ENCODE measurements at regions of chr14 and their contacts with region 1.

Region 1: DNA sequence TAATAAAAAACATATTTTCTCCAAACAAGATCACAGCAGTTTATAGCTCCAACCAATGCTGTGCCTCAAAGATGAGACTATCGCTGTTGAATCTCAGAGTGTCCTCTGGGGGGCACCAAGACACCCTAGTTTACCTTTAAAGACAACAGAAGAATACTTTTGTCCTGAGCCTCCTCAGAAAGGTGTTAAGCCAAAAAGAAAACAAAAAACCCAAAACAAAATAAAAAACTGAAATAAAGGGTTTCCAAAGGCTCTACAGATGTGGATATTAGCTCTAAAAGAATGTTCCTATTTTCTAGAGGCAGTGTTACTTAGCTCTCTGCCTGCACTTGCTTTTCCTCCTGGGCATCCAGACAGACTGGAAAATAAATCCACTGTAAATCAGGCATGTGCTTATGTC is 86.9 kb upstream of the TTC7B start:
- DNase-seq: peak; percentile 17
- ATAC-seq: peak; percentile 85
- H3K4me3 ChIP-seq: no peak overlapping the region
- H3K27ac ChIP-seq: no peak overlapping the region
- H3K4me1 ChIP-seq: peaks cover 8% of the 10 kb centered on the region; the same call in 1 of the 2 replicates
- H3K27me3 ChIP-seq: no peaks in the 10 kb centered on the region
- CTCF ChIP-seq: peak; percentile 64 to 78 (median 73)
- EP300 ChIP-seq: no peak
- POLR2A ChIP-seq: no peak
- RAD21 ChIP-seq: peak; percentile 91

Region 2: DNA sequence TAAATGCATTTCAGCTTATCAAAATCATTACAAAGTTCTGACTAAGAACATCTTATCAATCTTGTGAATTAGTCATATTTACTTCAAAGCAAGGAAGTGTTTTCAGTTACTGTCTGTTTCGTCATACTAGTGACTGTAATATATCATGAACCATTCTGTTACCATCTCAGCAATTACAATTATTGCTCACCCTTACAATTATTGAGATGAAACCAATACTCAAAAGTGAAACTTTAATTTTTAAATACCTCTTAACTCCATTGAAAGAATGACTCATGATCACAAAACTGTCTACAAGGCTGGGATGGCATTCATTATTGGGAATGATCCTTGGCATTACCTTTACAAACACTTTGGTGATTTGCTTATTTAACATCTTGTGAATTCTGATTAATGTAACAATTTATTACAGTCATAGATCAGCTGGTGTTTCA is 67.1 kb after region 1 on chr14:
- CTCF ChIA-PET with region 1: interaction called, 8 read pairs
- POLR2A ChIA-PET with region 1: no interaction called
- RAD21 ChIA-PET with region 1: interaction called, 3 read pairs
- SMC1A ChIA-PET with region 1: interaction called, 6 read pairs
- in situ Hi-C with region 1: no loop called
- intact Hi-C with region 1: loop called (anchors 5 kb)
- DNase-seq: no peak
- ATAC-seq: peak; percentile 94
- H3K4me3 ChIP-seq: no peak overlapping the region
- H3K27ac ChIP-seq: no peak overlapping the region
- H3K4me1 ChIP-seq: peaks cover 13% of the 10 kb centered on the region
- H3K27me3 ChIP-seq: no peaks in the 10 kb centered on the region
- CTCF ChIP-seq: no peak
- EP300 ChIP-seq: peak in 1 of 2 experiments; percentile 42; a peak in 1 of 4 replicates
- POLR2A ChIP-seq: no peak
- RAD21 ChIP-seq: no peak

Region 3: GRCh38 chr14:91060351-91061055 is 157.4 kb after region 1 on chr14 and contains the start of gene RPS6KA5:
- CTCF ChIA-PET with region 1: interaction called, 32 read pairs
- POLR2A ChIA-PET with region 1: interaction called, 9 read pairs
- RAD21 ChIA-PET with region 1: interaction called, 9 read pairs
- SMC1A ChIA-PET with region 1: interaction called, 13 read pairs
- in situ Hi-C with region 1: no loop called
- intact Hi-C with region 1: loop called (anchors 5 kb)
- DNase-seq: peak; percentile 100
- ATAC-seq: peak; percentile 90
- H3K4me3 ChIP-seq: peak within 1 kb of the TSS; percentile 87
- H3K27ac ChIP-seq: peak within 1 kb of the TSS; percentile 72
- H3K4me1 ChIP-seq: peaks cover 11% of the 10 kb centered on the region
- H3K27me3 ChIP-seq: no peaks in the 10 kb centered on the region
- CTCF ChIP-seq: no peak; a peak in 2 of 6 replicates
- EP300 ChIP-seq: peak in 1 of 2 experiments; percentile 53; a peak in 2 of 4 replicates
- POLR2A ChIP-seq: peak; percentile 75
- RAD21 ChIP-seq: no peak
- polyA plus RNA-seq, gene RPS6KA5: 1.4 to 1.5 TPM

Region 4: GRCh38 chr14:91071773-91072172 is 168.7 kb after region 1 on chr14:
- CTCF ChIA-PET with region 1: no interaction called
- POLR2A ChIA-PET with region 1: no interaction called
- RAD21 ChIA-PET with region 1: no interaction called
- SMC1A ChIA-PET with region 1: no interaction called
- in situ Hi-C with region 1: no loop called
- intact Hi-C with region 1: no loop called
- DNase-seq: no peak
- ATAC-seq: no peak
- H3K4me3 ChIP-seq: no peak overlapping the region
- H3K27ac ChIP-seq: no peak overlapping the region
- H3K4me1 ChIP-seq: no peaks in the 10 kb centered on the region
- H3K27me3 ChIP-seq: no peaks in the 10 kb centered on the region
- CTCF ChIP-seq: no peak
- EP300 ChIP-seq: no peak
- POLR2A ChIP-seq: no peak
- RAD21 ChIP-seq: no peak

Region 5: DNA sequence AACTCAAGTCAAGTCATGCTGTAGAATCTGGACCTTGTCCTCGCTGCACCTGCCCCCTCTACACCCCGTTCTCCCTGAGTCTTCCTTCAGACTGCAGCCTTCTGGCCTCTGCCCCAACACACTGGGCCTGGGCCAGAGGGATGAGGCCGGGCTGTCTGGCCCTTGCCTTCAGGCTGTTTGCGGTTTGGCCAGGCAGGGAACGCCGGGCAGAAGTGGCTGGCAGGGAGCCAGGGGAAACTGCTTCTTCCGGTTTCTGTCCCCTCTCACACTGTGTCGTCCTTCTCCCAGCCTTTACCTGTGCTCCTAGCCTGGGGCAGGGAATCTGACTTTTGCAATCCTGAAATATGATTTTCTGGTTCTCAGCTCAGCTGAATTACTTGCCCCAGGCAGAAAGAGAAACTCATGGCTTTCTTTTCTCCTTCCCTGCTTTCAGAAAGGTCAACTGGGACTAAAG is 224.3 kb after region 1 on chr14:
- CTCF ChIA-PET with region 1: interaction called, 4 read pairs
- POLR2A ChIA-PET with region 1: no interaction called
- RAD21 ChIA-PET with region 1: interaction called, 4 read pairs
- SMC1A ChIA-PET with region 1: no interaction called
- in situ Hi-C with region 1: loop called (anchors 5 kb)
- intact Hi-C with region 1: no loop called
- DNase-seq: no peak
- ATAC-seq: no peak
- H3K4me3 ChIP-seq: no peak overlapping the region
- H3K27ac ChIP-seq: no peak overlapping the region
- H3K4me1 ChIP-seq: peaks cover 11% of the 10 kb centered on the region
- H3K27me3 ChIP-seq: no peaks in the 10 kb centered on the region
- CTCF ChIP-seq: no peak
- EP300 ChIP-seq: no peak
- POLR2A ChIP-seq: no peak
- RAD21 ChIP-seq: no peak

Region 6: DNA sequence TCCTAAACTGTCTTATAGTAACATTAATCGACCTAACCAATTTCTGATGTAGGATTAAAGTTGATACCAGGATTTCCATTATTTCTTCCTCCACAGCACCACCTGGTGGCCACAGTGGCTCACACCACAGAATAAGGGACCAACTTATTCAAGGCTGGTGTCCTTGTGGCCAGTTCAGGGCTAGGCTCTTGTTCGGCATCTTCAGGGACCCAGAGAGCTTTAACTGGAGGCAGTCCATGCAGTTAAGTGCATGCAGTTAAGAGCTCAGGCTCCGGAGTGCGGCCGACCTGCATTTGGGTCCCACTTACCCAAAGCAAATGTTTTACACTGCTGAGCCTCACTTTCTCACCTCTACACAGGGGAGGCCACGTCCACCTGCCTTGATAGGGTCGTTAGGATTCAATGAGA is 383.4 kb after region 1 on chr14:
- CTCF ChIA-PET with region 1: interaction called, 11 read pairs
- POLR2A ChIA-PET with region 1: no interaction called
- RAD21 ChIA-PET with region 1: interaction called, 12 read pairs
- SMC1A ChIA-PET with region 1: interaction called, 15 read pairs
- in situ Hi-C with region 1: loop called (anchors 5 kb)
- intact Hi-C with region 1: loop called (anchors 5 kb)
- DNase-seq: peak; percentile 21
- ATAC-seq: peak; percentile 92
- H3K4me3 ChIP-seq: no peak overlapping the region
- H3K27ac ChIP-seq: no peak overlapping the region
- H3K4me1 ChIP-seq: no peaks in the 10 kb centered on the region
- H3K27me3 ChIP-seq: no peaks in the 10 kb centered on the region
- CTCF ChIP-seq: peak; percentile 69 to 86 (median 85); a peak in 5 of 6 replicates
- EP300 ChIP-seq: no peak
- POLR2A ChIP-seq: no peak
- RAD21 ChIP-seq: peak; percentile 84

Measured in GM12878 (cell line).